AG04449 (cell line): ENCODE measurements at regions of chr10 and their contacts with region 1.

Region 1: DNA sequence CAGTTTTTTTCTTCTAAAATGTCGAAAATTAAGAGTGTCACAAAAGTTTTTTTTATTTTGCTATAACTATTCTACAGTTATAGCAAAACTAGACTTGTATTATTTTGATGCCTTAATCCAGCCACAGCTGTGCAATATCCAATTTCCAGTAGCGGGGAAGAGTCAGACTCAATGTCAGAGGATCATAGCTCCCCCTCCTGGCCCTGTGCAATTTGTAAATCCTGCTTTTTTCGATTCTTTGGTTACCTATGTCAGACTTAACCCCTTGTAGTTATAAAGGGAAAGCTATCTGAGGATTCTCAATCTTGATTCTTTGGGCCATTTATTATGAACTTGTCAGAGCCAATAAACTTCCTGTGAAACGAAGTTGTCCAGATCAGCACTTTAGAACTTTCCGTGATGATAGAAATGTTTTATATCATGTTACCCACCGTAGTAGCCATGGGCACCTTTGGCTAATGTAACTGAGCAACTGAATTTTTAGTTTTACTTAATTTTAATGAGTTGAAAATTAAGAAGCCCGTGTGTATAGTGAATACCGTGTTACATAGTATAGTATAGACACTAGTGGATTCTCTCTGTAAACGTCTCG is 87.7 kb upstream of the PRKCQ start:
- DNase-seq: no peak
- H3K4me3 ChIP-seq: no peak overlapping the region
- CTCF ChIP-seq: peak; percentile 48

Region 2: GRCh38 chr10:6416892-6417512 is 250.8 kb before region 1 on chr10:
- CTCF ChIA-PET with region 1: interaction called, 27 read pairs
- POLR2A ChIA-PET with region 1: no interaction called
- DNase-seq: no peak
- H3K4me3 ChIP-seq: no peak overlapping the region
- CTCF ChIP-seq: peak; percentile 37

Region 3: GRCh38 chr10:6678211-6678803 is 10.5 kb after region 1 on chr10:
- CTCF ChIA-PET with region 1: interaction called, 21 read pairs
- POLR2A ChIA-PET with region 1: no interaction called
- DNase-seq: no peak
- H3K4me3 ChIP-seq: no peak overlapping the region
- CTCF ChIP-seq: peak; percentile 65

Region 4: GRCh38 chr10:7417103-7417623 is 749.4 kb after region 1 on chr10:
- CTCF ChIA-PET with region 1: interaction called, 54 read pairs
- POLR2A ChIA-PET with region 1: no interaction called
- DNase-seq: peak; percentile 4
- H3K4me3 ChIP-seq: no peak overlapping the region
- CTCF ChIP-seq: peak; percentile 15

Region 5: DNA sequence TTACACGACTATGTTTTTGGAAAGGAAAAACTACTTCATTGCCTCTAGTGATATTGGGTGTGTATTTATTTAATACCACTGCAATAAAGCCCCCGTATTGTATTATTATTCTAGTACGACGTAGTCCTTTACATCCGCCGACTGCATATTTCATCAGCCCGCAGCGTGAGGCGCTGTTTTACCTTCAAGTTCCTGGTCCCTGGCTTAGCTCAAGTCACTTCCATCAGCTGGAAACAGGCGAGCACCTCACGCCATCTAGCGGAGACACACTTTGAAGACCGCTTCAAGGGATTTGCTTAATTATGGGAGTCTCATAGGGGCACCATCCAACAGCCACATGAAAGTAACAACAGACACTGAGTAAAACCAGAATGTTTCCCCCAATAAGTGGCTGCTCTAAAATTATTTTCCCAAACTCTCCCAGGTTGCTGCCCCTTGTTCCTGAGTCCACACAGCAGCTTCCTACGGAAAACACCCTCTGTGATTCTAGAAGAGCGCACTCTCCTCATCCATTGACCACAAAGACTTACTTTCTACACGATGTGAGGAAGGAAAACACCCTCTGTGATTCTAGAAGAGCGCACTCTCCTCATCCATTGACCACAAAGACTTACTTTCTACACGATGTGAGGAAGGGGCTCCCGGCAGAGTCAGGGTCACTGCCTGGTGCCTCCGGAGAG is 1019.6 kb after region 1 on chr10:
- CTCF ChIA-PET with region 1: interaction called, 11 read pairs
- POLR2A ChIA-PET with region 1: no interaction called
- DNase-seq: peak; percentile 28
- H3K4me3 ChIP-seq: no peak overlapping the region
- CTCF ChIP-seq: peak; percentile 81